Sigmoid colon (tissue), 7 donors: ENCODE measurements at regions of chr5 and their contacts with region 1.

Region 1: GRCh38 chr5:114369680-114370417 is 8.0 kb downstream of the KCNN2 start:
- DNase-seq: no peak
- H3K4me3 ChIP-seq: no peak overlapping the region
- H3K27ac ChIP-seq: no peak overlapping the region
- H3K4me1 ChIP-seq: no peaks in the 10 kb centered on the region
- H3K27me3 ChIP-seq: no peaks in the 10 kb centered on the region
- CTCF ChIP-seq: no peak
- EP300 ChIP-seq: no peak
- POLR2A ChIP-seq: no peak

Region 2: DNA sequence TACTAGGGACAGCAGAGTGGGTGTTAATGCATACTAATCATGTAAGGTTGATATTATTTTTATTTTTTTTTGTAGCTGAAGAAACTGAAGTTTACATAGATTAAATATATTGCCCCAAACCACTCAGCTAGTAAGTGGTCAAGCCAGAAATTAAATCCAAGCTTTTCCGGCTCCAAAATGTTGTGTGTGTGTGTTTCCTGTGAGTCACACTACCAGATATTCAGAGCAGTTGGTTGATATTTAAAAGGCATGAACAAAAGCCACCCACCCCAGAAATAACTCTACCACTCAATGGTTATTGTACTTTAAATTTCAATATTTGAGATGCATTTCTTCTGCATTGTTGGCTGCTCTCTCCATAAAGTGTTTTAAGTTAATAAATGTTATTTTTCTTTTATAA is 21.5 kb after region 1 on chr5:
- intact Hi-C with region 1: loop called (anchors 2 kb)
- DNase-seq: no peak
- H3K4me3 ChIP-seq: no peak overlapping the region
- H3K27ac ChIP-seq: no peak overlapping the region
- H3K4me1 ChIP-seq: no peaks in the 10 kb centered on the region
- H3K27me3 ChIP-seq: no peaks in the 10 kb centered on the region
- CTCF ChIP-seq: no peak
- EP300 ChIP-seq: no peak
- POLR2A ChIP-seq: no peak